ENCODE measurements at regions of chr7 and their contacts with region 1.

Region 1: DNA sequence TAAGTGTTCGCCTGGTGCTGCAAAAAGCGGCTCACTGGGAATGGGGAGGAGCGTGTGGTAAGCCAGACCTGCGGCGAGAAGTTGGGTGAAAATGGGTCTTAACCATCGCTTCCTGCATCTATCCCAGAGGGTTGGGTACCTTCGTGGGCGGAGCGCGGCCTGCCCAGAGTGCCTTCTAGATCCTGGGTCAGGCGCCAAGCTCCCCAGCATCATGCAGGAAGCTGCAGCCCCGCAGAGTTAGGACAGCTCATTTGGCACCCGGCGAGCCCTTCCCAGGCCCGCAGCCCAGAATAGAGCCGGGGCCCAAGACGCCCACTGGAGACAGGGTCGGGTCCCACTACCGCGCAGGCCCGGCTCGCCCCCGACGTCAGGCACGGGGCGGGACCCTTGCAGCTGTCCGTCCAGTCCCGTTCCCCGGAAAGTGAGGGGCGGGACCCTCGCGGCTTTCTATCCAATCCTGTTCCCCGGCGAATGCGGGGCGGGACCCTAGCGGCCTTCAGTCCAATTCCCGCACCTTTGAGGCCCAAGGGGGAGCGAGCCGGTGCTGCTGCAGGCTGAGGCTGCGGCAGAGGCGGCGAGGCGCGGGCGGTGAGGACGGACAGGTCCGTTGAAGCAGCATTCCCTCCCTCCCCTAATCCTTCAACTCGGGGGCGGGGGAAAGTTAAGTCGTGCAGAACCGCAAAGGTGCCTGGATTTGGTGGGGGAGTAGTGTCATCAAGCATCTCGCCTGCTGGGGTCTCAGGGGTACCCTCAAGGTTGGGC is at the start of gene CROT:
- DNase-seq: peak; percentile 82 to 96
- H3K4me3 ChIP-seq: peak within 1 kb of the TSS; percentile 93
- H3K27ac ChIP-seq: no peak within 1 kb of the TSS
- H3K4me1 ChIP-seq: peaks cover 17% of the 10 kb centered on the region
- H3K27me3 ChIP-seq: no peaks in the 10 kb centered on the region
- CTCF ChIP-seq: no peak
- total RNA-seq, gene CROT: 13.4 and 15.2 TPM in 2 replicates

Region 2: GRCh38 chr7:87252166-87252565 is 93.2 kb before region 1 on chr7:
- CTCF ChIA-PET with region 1: no interaction called
- POLR2A ChIA-PET with region 1: no interaction called
- intact Hi-C with region 1: no loop called
- DNase-seq: no peak
- H3K4me3 ChIP-seq: no peak overlapping the region
- H3K27ac ChIP-seq: no peak overlapping the region
- H3K4me1 ChIP-seq: no peaks in the 10 kb centered on the region
- H3K27me3 ChIP-seq: peaks cover 5% of the 10 kb centered on the region; the same call in 1 of the 2 replicates
- CTCF ChIP-seq: no peak

Region 3: GRCh38 chr7:87318741-87319140 is 26.6 kb before region 1 on chr7:
- CTCF ChIA-PET with region 1: interaction called, 3 read pairs
- POLR2A ChIA-PET with region 1: interaction called, 5 read pairs
- intact Hi-C with region 1: loop called (anchors 1 kb)
- DNase-seq: no peak
- H3K4me3 ChIP-seq: peak overlapping the region; percentile 52; the same call in 1 of the 2 replicates
- H3K27ac ChIP-seq: no peak overlapping the region
- H3K4me1 ChIP-seq: peaks cover 39% of the 10 kb centered on the region
- H3K27me3 ChIP-seq: no peaks in the 10 kb centered on the region
- CTCF ChIP-seq: no peak

Region 4: DNA sequence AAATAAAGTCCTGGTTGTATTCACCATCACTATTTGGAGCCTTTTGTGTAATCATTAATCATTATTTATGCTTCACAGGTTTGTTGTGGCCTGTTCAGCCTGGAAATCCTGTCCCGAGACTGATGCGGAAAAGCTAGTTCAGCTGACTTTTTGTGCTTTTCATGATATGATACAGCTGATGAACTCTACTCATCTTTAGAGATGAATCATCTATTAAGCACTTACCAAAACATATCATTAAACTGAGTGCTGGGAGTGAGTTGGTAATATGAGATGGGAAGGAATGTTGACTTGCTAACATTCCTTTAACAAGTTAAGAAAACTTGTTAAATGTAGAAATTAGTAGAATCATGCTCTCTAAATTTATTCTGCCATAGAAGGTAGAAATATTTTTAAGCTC is 53.1 kb after region 1 on chr7:
- CTCF ChIA-PET with region 1: no interaction called
- POLR2A ChIA-PET with region 1: no interaction called
- intact Hi-C with region 1: loop called (anchors 1 kb)
- DNase-seq: peak; percentile 33 to 90
- H3K4me3 ChIP-seq: no peak overlapping the region
- H3K27ac ChIP-seq: peak overlapping the region; percentile 22
- H3K4me1 ChIP-seq: peaks cover 26% of the 10 kb centered on the region
- H3K27me3 ChIP-seq: no peaks in the 10 kb centered on the region
- CTCF ChIP-seq: no peak